ENCODE measurements at regions of chr2 and their contacts with region 1.

Region 1: DNA sequence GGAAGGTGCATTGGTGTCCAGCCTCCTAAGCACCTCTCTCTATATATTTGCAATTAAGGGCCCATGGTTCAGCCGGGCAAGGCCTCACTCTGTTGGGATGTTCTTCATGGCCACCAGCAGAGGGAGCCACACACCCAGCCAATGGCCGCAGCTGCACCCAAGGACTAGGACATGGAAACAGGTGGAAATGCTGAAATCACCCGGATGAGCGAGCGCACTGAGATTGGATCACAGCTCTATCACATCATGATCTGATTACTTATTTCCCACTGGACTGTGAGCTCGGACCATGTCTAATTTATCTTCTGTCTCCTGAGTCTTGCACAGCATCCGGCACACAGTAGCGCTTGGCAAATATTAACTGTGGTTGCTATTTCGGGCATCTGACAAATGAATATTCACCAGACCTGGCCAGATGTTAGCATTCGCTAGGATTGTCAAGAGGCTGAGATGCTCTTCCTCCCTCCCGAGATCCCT is 31.2 kb downstream of the KIF3C start:
- DNase-seq: peak; percentile 80
- H3K4me3 Mint-ChIP-seq: no peak overlapping the region
- H3K27ac Mint-ChIP-seq: no peak overlapping the region
- H3K4me1 Mint-ChIP-seq: no peaks in the 10 kb centered on the region
- H3K27me3 Mint-ChIP-seq: peaks cover 7% of the 10 kb centered on the region

Region 2: DNA sequence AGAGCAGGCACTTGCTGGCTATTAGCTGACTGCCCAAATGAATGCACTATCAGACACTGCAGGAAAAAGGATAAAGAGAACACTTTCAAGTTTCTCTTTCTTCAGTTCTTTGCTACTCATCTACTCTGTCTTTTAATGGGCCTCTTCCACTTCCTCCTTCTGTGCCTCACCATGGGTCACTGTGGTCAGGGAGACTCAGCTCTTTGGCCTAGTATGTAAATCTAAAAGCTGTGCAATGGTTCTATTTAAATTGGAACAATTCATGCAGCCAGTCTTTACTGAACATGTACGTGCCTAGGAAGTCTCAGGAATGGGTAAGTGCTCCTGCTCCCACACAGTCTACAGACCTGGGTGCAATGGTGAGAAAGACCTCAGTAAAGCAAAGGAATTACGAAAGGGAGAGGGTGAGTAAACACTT is 530.3 kb before region 1 on chr2:
- CTCF ChIA-PET with region 1: no interaction called
- DNase-seq: no peak
- H3K4me3 Mint-ChIP-seq: no peak overlapping the region
- H3K27ac Mint-ChIP-seq: no peak overlapping the region
- H3K4me1 Mint-ChIP-seq: peaks cover 7% of the 10 kb centered on the region
- H3K27me3 Mint-ChIP-seq: no peaks in the 10 kb centered on the region

Region 3: GRCh38 chr2:25722224-25722623 is 228.9 kb before region 1 on chr2:
- CTCF ChIA-PET with region 1: no interaction called
- DNase-seq: no peak
- H3K4me3 Mint-ChIP-seq: no peak overlapping the region
- H3K27ac Mint-ChIP-seq: no peak overlapping the region
- H3K4me1 Mint-ChIP-seq: peaks cover 12% of the 10 kb centered on the region
- H3K27me3 Mint-ChIP-seq: peaks cover 17% of the 10 kb centered on the region

Region 4: GRCh38 chr2:25972049-25972823 is 21.1 kb after region 1 on chr2:
- CTCF ChIA-PET with region 1: interaction called, 11 read pairs
- DNase-seq: no peak
- H3K4me3 Mint-ChIP-seq: no peak overlapping the region
- H3K27ac Mint-ChIP-seq: no peak overlapping the region
- H3K4me1 Mint-ChIP-seq: no peaks in the 10 kb centered on the region
- H3K27me3 Mint-ChIP-seq: no peaks in the 10 kb centered on the region

Region 5: GRCh38 chr2:26144953-26145680 is 194.0 kb after region 1 on chr2:
- CTCF ChIA-PET with region 1: interaction called, 25 read pairs
- DNase-seq: peak; percentile 75
- H3K4me3 Mint-ChIP-seq: no peak overlapping the region
- H3K27ac Mint-ChIP-seq: no peak overlapping the region
- H3K4me1 Mint-ChIP-seq: no peaks in the 10 kb centered on the region
- H3K27me3 Mint-ChIP-seq: peaks cover 13% of the 10 kb centered on the region